CD4-positive, alpha-beta memory T cell (primary cell): ENCODE measurements at regions of chr1 and their contacts with region 1.

Region 1: GRCh38 chr1:9867408-9868243 is 42.4 kb downstream of the CTNNBIP1 start:
- DNase-seq: peak; percentile 81 to 86 (median 81)
- H3K4me3 ChIP-seq: no peak overlapping the region
- H3K4me3 Mint-ChIP-seq: no peak overlapping the region
- H3K27ac ChIP-seq: no peak overlapping the region
- H3K27ac Mint-ChIP-seq: peak overlapping the region in 1 of 7 donors; percentile 6
- H3K4me1 ChIP-seq: peaks cover 6% of the 10 kb centered on the region
- H3K4me1 Mint-ChIP-seq: peaks cover 0 to 4% (median 0%) of the 10 kb centered on the region in 4 donors
- H3K27me3 ChIP-seq: no peaks in the 10 kb centered on the region
- H3K27me3 Mint-ChIP-seq: no peaks in the 10 kb centered on the region

Region 2: DNA sequence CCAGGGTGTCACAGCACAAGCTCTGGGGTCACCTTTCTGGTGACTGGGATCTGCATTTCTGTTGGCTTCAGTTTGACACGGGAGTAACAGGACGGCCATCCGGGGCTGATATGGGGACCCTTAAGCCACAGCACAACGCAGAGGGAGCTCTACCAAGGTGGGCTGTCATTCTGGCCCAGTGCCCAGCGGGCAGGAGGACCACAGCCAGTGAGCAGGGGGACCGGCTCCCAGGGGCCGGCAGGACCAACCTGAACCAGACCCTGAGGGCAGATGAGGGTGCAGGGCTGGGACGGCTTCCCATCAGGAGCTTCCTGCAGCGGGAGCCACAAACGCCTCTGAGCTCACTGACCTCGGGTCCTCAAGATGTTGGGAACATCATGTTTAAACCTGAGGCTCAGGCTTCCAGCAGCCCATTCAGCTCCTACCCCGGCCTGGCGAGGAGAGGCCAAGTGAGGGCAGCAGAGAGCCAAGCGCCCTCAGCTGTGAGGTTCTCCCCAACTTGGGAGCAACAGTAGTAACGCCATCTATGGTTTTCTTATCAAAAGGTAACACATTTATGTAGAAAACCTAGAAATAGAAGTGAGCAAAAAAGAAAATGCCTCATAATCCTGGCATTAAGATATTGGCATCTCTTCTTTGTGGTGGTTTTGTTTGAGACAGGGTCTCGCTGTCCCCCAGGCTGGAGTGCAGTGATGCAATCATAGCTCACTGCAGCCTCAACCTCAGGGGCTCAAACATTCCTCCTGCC is 252.1 kb before region 1 on chr1:
- CTCF ChIA-PET with region 1: interaction called, 55 read pairs
- POLR2A ChIA-PET with region 1: interaction called, 3 read pairs
- intact Hi-C with region 1: loop called (anchors 1 kb)
- DNase-seq: peak in 4 of 5 donors; percentile 42 to 51 (median 50)
- H3K4me3 ChIP-seq: no peak overlapping the region
- H3K4me3 Mint-ChIP-seq: no peak overlapping the region
- H3K27ac ChIP-seq: no peak overlapping the region
- H3K27ac Mint-ChIP-seq: no peak overlapping the region
- H3K4me1 ChIP-seq: peaks cover 6% of the 10 kb centered on the region
- H3K4me1 Mint-ChIP-seq: no peaks in the 10 kb centered on the region
- H3K27me3 ChIP-seq: no peaks in the 10 kb centered on the region
- H3K27me3 Mint-ChIP-seq: peaks cover 0 to 5% of the 10 kb centered on the region in 2 donors

Region 3: GRCh38 chr1:9823943-9824701 is 43.5 kb before region 1 on chr1 and contains the start of gene CLSTN1:
- CTCF ChIA-PET with region 1: interaction called, 4 read pairs
- POLR2A ChIA-PET with region 1: no interaction called
- intact Hi-C with region 1: loop called (anchors 2 kb)
- DNase-seq: peak; percentile 85 to 92 (median 86)
- H3K4me3 ChIP-seq: peak within 1 kb of the TSS; percentile 73 to 76
- H3K4me3 Mint-ChIP-seq: peak within 1 kb of the TSS; percentile 94 to 99 (median 97)
- H3K27ac ChIP-seq: peak within 1 kb of the TSS; percentile 55
- H3K27ac Mint-ChIP-seq: peak within 1 kb of the TSS; percentile 90 to 97 (median 96)
- H3K4me1 ChIP-seq: peaks cover 55% of the 10 kb centered on the region
- H3K4me1 Mint-ChIP-seq: peaks cover 25 to 68% (median 41%) of the 10 kb centered on the region in 4 donors
- H3K27me3 ChIP-seq: no peaks in the 10 kb centered on the region
- H3K27me3 Mint-ChIP-seq: no peaks in the 10 kb centered on the region
- total RNA-seq, gene CLSTN1: 107 to 109 TPM

Region 4: DNA sequence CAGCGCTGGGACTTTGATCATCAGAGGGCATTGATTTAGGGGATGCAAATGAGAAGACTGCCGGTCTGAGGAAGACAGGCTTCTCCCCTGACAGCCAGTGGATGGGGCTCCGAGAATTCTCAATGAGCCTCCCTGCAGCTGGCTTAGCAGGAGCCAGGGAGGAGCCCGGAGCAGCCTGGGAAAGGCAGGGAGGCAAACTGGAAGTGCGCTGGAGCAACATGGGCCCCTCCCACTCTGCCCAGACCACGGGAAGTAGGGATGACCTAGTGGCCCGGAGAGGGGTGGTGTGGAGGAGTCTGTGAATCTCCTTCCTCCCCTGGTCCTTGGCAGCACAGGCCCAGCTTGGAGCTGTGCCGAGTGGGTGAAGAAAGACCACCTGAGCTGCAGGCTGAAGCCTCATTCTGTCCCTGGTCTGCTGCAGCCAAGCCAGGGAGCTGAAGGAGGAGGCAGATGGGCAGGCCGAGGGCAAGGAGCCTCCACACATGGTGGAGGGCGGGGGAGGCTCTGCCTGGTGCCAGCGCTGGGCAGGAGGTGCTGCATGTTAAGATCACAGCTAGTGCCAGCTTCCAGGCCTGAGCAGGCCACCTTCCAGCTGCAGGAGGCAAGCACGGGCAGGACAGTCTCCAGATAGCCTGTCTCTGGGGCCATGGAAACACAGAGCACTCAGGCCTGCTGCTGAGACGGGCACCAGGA is 31.7 kb before region 1 on chr1:
- CTCF ChIA-PET with region 1: no interaction called
- POLR2A ChIA-PET with region 1: no interaction called
- intact Hi-C with region 1: no loop called
- DNase-seq: no peak
- H3K4me3 ChIP-seq: no peak overlapping the region
- H3K4me3 Mint-ChIP-seq: no peak overlapping the region
- H3K27ac ChIP-seq: no peak overlapping the region
- H3K27ac Mint-ChIP-seq: no peak overlapping the region
- H3K4me1 ChIP-seq: no peaks in the 10 kb centered on the region
- H3K4me1 Mint-ChIP-seq: peaks cover 0 to 5% (median 1%) of the 10 kb centered on the region in 4 donors
- H3K27me3 ChIP-seq: no peaks in the 10 kb centered on the region
- H3K27me3 Mint-ChIP-seq: no peaks in the 10 kb centered on the region

Region 5: GRCh38 chr1:9990944-9991343 is 123.3 kb after region 1 on chr1:
- CTCF ChIA-PET with region 1: no interaction called
- POLR2A ChIA-PET with region 1: no interaction called
- intact Hi-C with region 1: no loop called
- DNase-seq: no peak
- H3K4me3 ChIP-seq: no peak overlapping the region
- H3K4me3 Mint-ChIP-seq: no peak overlapping the region
- H3K27ac ChIP-seq: no peak overlapping the region
- H3K27ac Mint-ChIP-seq: no peak overlapping the region
- H3K4me1 ChIP-seq: peaks cover 4% of the 10 kb centered on the region
- H3K4me1 Mint-ChIP-seq: peaks cover 0 to 4% (median 0%) of the 10 kb centered on the region in 4 donors
- H3K27me3 ChIP-seq: no peaks in the 10 kb centered on the region
- H3K27me3 Mint-ChIP-seq: peaks cover 6 to 10% of the 10 kb centered on the region in 2 donors